Activated T-helper 2 cell treated with anti-CD3 and anti-CD28 coated beads, Interferon-gamma antibody, Interleukin-2, Interleukin-4, amounts not matched to agents 10 μg/mL and 5 μg/mL and 100 μg/mL, durations not matched to agents 14 hours and 24 hours and 36 hours (primary cell): ENCODE measurements at regions of chr21 and their contacts with region 1.

Region 1: GRCh38 chr21:38505654-38506515 is 7.6 kb upstream of the ERG start:
- DNase-seq: peak; percentile 21
- H3K4me3 Mint-ChIP-seq: no peak overlapping the region
- H3K27ac Mint-ChIP-seq: no peak overlapping the region
- H3K4me1 Mint-ChIP-seq: peaks cover 22% of the 10 kb centered on the region
- H3K27me3 Mint-ChIP-seq: peaks cover 31% of the 10 kb centered on the region

Region 2: DNA sequence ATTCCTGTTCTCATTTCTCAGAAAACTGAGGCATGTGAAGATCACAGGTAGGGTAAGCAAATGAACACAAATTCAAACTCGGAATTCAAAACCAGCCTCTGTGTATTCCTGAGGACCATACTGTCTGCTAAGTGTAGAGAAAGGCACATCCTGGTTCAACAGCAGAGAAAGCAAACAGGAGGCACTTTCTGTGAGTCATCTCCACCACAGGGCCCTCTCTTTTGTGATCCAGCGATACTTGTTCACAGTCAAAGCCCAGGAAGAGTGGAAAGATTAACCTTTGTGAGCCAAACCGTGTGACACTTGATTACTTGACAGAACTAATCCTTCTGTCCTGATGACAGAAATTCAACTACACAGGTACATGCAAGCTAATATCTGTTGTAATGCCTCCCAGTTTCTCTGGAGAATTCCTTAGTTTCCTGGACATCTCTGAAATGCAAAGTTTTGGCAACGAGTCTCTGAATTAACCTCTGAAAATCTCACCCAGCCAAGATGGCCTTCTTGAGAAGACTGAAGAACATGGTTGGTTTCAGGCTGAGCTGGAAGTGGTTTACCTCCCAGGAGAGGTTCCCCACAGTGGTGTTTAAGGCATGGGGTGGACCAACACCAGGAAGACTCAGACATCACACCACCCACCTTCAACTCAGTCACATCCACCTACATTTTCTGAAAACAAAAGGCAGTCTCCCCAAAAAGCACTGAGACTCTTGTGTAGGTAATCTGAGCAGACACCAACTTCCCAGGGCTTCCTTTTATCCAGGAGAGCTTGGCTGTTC is 90.6 kb after region 1 on chr21:
- intact Hi-C with region 1: loop called (anchors 2 kb)
- DNase-seq: no peak
- H3K4me3 Mint-ChIP-seq: no peak overlapping the region
- H3K27ac Mint-ChIP-seq: peak overlapping the region; percentile 48
- H3K4me1 Mint-ChIP-seq: peaks cover 17% of the 10 kb centered on the region
- H3K27me3 Mint-ChIP-seq: peaks cover 18% of the 10 kb centered on the region

Region 3: GRCh38 chr21:38661197-38661871 is 155.4 kb after region 1 on chr21:
- intact Hi-C with region 1: loop called (anchors 5 kb)
- DNase-seq: no peak
- H3K4me3 Mint-ChIP-seq: peak overlapping the region; percentile 61
- H3K27ac Mint-ChIP-seq: no peak overlapping the region
- H3K4me1 Mint-ChIP-seq: peaks cover 6% of the 10 kb centered on the region
- H3K27me3 Mint-ChIP-seq: peaks cover 71% of the 10 kb centered on the region

Region 4: GRCh38 chr21:38712071-38712470 is 206.2 kb after region 1 on chr21:
- intact Hi-C with region 1: loop called (anchors 5 kb)
- DNase-seq: no peak
- H3K4me3 Mint-ChIP-seq: no peak overlapping the region
- H3K27ac Mint-ChIP-seq: no peak overlapping the region
- H3K4me1 Mint-ChIP-seq: no peaks in the 10 kb centered on the region
- H3K27me3 Mint-ChIP-seq: peaks cover 33% of the 10 kb centered on the region

Region 5: GRCh38 chr21:39137248-39138178 is 631.6 kb after region 1 on chr21:
- intact Hi-C with region 1: loop called (anchors 1 kb)
- DNase-seq: no peak
- H3K4me3 Mint-ChIP-seq: no peak overlapping the region
- H3K27ac Mint-ChIP-seq: no peak overlapping the region
- H3K4me1 Mint-ChIP-seq: peaks cover 7% of the 10 kb centered on the region
- H3K27me3 Mint-ChIP-seq: peaks cover 1% of the 10 kb centered on the region